A673 (cell line): ENCODE measurements at regions of chr10 and their contacts with region 1.

Region 1: GRCh38 chr10:52740913-52741675 is 31.5 kb downstream of the MBL2 start:
- DNase-seq: peak; percentile 59
- H3K4me3 ChIP-seq: no peak overlapping the region
- H3K27ac ChIP-seq: no peak overlapping the region
- H3K4me1 ChIP-seq: no peaks in the 10 kb centered on the region
- H3K27me3 ChIP-seq: no peaks in the 10 kb centered on the region
- CTCF ChIP-seq: peak; percentile 81

Region 2: DNA sequence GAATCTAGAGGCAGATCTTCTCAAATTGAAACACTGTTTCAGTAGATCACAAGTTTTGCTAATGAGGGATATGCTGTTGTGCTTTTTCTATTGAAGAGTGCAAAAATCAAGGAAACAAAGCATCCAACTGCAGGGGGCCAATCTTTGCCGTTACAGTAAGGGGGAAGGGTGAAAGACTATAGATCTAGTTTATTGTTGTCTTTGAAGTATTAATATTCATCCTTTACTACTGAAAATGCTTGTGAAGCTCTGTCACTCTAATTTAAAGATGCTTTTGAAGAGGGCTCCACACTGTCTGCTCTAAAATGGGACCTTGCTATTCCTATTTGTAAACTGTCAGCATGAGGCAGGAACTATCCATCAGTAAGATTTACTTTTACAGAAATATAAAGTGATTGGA is 78.8 kb before region 1 on chr10:
- CTCF ChIA-PET with region 1: no interaction called
- POLR2A ChIA-PET with region 1: no interaction called
- intact Hi-C with region 1: no loop called
- DNase-seq: no peak
- H3K4me3 ChIP-seq: no peak overlapping the region
- H3K27ac ChIP-seq: no peak overlapping the region
- H3K4me1 ChIP-seq: peaks cover 4% of the 10 kb centered on the region
- H3K27me3 ChIP-seq: no peaks in the 10 kb centered on the region
- CTCF ChIP-seq: no peak

Region 3: GRCh38 chr10:52677086-52677485 is 64.0 kb before region 1 on chr10:
- CTCF ChIA-PET with region 1: no interaction called
- POLR2A ChIA-PET with region 1: no interaction called
- intact Hi-C with region 1: no loop called
- DNase-seq: no peak
- H3K4me3 ChIP-seq: no peak overlapping the region
- H3K27ac ChIP-seq: no peak overlapping the region
- H3K4me1 ChIP-seq: no peaks in the 10 kb centered on the region
- H3K27me3 ChIP-seq: no peaks in the 10 kb centered on the region
- CTCF ChIP-seq: no peak

Region 4: GRCh38 chr10:52779541-52780390 is 38.7 kb after region 1 on chr10:
- CTCF ChIA-PET with region 1: interaction called, 3 read pairs
- POLR2A ChIA-PET with region 1: no interaction called
- intact Hi-C with region 1: loop called (anchors 2 kb)
- DNase-seq: peak; percentile 70
- H3K4me3 ChIP-seq: no peak overlapping the region
- H3K27ac ChIP-seq: no peak overlapping the region
- H3K4me1 ChIP-seq: no peaks in the 10 kb centered on the region
- H3K27me3 ChIP-seq: no peaks in the 10 kb centered on the region
- CTCF ChIP-seq: peak; percentile 86